GM18951 (cell line): ENCODE measurements at regions of chr3 and their contacts with region 1.

Region 1: DNA sequence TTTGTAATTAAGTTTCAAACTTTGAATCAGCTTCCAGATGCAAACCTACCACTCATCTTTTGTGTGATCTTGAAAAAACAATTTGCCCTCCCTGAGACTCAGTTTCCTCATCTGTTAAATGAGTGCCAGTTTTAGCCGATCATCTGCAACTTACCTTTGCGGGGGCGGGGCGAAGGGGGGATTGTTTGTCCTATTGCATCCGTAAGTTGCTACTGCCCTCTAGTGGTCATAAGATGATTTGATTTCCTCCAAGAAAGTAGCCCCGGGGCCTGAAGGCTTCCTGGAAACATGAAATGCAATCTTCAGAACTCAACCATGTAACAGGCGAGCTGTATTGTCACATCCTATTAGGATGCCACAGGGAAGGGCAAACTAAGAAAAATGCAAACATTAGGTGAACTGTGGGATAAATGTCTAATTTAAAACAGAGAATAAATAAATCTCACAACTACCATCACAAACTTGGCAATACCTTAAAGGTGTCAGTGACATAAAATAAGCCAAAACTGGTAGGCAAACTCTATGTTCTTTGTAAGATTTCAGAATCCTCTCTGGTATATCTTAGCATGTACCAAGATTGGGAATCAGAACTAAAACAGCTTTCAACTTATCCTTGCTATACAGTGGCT is 63.5 kb upstream of the CLDN18 start:
- POLR2A ChIP-seq: no peak

Region 2: DNA sequence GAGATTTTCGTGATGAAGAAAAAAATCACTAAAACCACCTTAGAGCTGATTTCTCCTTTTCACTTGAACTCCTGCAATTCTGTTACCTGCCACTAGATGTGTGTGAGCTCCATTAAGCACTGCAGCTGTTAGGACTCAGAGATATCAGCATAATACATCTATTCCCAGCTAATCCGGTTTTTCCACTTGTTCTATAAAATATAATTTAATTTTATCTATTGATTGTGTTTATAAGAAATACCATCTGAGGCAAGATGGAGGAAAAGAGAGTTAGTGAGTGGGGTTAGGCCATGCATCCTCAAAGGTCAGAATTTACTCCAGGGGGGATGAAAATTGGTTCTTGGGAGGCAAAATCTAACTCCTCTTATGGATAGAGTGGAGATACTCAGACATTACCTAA is 836.0 kb before region 1 on chr3:
- in situ Hi-C with region 1: loop called (anchors 10 kb)
- POLR2A ChIP-seq: no peak

Region 3: DNA sequence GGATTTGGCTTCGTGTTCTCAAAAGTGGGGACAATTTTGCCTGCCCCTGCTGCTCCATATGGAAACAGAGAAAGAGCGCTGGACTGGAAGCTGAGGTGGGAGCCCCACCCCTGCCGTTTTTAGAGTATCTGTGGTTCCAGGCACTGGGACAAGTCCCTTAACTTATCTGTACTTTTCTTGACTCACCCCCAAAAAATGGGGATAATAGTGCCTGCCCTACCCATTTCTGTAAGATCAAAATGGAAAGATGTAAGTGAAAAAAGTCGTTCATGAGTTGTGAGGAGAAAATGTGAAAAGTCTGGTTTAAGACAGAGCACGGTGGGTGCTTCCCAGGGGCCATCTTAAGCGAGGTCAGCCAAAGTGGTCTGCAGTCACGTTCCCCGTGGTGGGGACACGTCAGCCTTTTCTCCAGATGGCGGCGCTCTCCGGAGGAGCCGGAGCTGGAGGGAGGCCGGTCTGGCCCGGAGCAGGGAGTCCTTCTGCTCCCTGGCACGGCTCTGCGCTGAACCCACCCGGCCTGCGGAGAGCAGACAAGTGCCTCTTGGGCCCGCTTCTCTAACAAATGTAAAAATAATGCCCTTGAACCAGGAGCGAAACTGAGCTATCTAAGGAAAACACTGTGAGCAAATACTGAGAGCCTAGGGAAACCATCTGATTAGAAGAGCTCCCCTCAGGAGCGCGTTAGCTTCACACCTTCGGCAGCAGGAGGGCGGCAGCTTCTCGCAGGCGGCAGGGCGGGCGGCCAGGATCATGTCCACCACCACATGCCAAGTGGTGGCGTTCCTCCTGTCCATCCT is 63.2 kb after region 1 on chr3 and contains the start of gene CLDN18:
- in situ Hi-C with region 1: no loop called
- POLR2A ChIP-seq: no peak